CD4-positive, alpha-beta T cell (primary cell): ENCODE measurements at regions of chr16 and their contacts with region 1.

Region 1: GRCh38 chr16:50806099-50807062 is 64.5 kb downstream of the CYLD start:
- DNase-seq: peak; percentile 76 to 93 (median 81)
- ATAC-seq: peak; percentile 94
- H3K4me3 ChIP-seq: peak overlapping the region; percentile 37
- H3K4me3 Mint-ChIP-seq: peak overlapping the region; percentile 80
- H3K27ac ChIP-seq: no peak overlapping the region
- H3K27ac Mint-ChIP-seq: peak overlapping the region; percentile 83
- H3K4me1 ChIP-seq: peaks cover 15% of the 10 kb centered on the region
- H3K4me1 Mint-ChIP-seq: peaks cover 13% of the 10 kb centered on the region
- H3K27me3 ChIP-seq: no peaks in the 10 kb centered on the region
- H3K27me3 Mint-ChIP-seq: no peaks in the 10 kb centered on the region
- CTCF ChIP-seq: peak; percentile 99

Region 2: GRCh38 chr16:49855280-49855821 is 951.0 kb before region 1 on chr16:
- CTCF ChIA-PET with region 1: no interaction called
- POLR2A ChIA-PET with region 1: no interaction called
- intact Hi-C with region 1: loop called in 1 of 2 experiments (anchors 10 kb)
- DNase-seq: peak; percentile 38 to 78 (median 61)
- ATAC-seq: peak; percentile 62
- H3K4me3 ChIP-seq: peak overlapping the region; percentile 24
- H3K4me3 Mint-ChIP-seq: peak overlapping the region; percentile 30
- H3K27ac ChIP-seq: no peak overlapping the region
- H3K27ac Mint-ChIP-seq: no peak overlapping the region
- H3K4me1 ChIP-seq: peaks cover 38% of the 10 kb centered on the region
- H3K4me1 Mint-ChIP-seq: peaks cover 13% of the 10 kb centered on the region
- H3K27me3 ChIP-seq: peaks cover 38 to 56% of the 10 kb centered on the region in 2 experiments
- H3K27me3 Mint-ChIP-seq: peaks cover 53% of the 10 kb centered on the region
- CTCF ChIP-seq: no peak

Region 3: DNA sequence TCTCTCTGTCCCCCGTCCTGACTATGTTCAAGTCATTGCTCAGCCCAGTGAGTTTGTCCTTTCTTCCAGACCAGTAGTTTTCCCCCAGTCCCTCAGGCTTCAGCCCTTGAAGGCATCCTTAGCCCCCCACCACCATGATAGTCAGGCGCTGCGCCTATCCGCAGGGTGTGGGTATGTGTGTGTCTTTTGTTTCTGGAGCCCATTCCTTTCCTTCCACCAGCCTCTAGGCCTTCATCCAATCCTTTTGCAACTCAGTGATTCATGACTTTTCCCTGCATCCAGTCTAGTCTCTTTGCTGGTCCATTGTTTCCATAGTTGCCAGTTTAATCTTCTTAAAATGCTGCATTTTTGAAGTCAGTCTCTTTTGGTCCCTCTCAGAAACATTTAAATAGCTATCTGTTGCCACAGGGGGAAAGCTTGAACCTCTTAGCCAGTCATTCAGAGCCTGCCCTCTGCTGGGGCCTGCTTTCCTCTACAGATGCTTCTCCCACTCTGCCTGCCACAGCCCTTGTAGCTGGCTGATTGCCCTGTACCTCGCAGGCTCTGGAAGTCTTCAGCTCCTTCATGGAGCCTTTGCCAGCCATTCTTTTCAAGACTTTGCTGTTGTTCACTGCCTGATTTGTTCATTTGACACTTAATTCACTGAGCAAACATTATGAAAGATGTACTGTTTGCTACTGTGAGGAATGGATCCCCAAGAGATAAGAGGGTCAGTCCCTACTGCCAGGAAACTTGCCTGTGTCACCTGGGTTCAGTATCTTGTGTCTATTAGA is 595.9 kb before region 1 on chr16:
- CTCF ChIA-PET with region 1: interaction called, 8 read pairs
- POLR2A ChIA-PET with region 1: interaction called, 6 read pairs
- intact Hi-C with region 1: loop called (anchors 1 kb)
- DNase-seq: peak; percentile 42 to 79 (median 58)
- ATAC-seq: peak; percentile 92
- H3K4me3 ChIP-seq: no peak overlapping the region
- H3K4me3 Mint-ChIP-seq: no peak overlapping the region
- H3K27ac ChIP-seq: peak overlapping the region in 1 of 2 donors; percentile 26
- H3K27ac Mint-ChIP-seq: peak overlapping the region; percentile 32
- H3K4me1 ChIP-seq: peaks cover 9% of the 10 kb centered on the region
- H3K4me1 Mint-ChIP-seq: peaks cover 50% of the 10 kb centered on the region
- H3K27me3 ChIP-seq: no peaks in the 10 kb centered on the region
- H3K27me3 Mint-ChIP-seq: no peaks in the 10 kb centered on the region
- CTCF ChIP-seq: peak; percentile 64

Region 4: DNA sequence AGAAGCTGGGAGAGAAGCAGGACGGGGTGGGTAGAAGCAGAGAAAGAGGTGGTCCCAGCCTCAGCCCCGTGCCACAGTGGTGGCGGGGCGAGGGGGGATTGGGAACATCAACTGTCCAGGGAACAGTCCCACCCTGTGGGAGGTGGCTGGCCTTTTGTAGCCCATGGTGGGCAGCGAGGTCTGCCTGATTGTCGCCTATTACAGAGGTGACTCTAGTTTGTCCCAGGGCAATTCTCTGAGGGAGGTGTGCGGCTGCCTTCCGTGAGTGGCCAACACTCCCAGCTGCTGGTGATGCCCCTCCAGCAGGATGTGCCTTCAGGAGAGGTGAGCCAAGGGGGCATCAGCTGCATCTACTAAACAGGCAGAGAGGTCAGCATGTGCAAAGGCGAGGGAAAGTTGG is 432.6 kb before region 1 on chr16:
- CTCF ChIA-PET with region 1: interaction called, 4 read pairs
- POLR2A ChIA-PET with region 1: interaction called, 3 read pairs
- intact Hi-C with region 1: loop called in 1 of 2 experiments (anchors 2 kb)
- DNase-seq: no peak
- ATAC-seq: no peak
- H3K4me3 ChIP-seq: no peak overlapping the region
- H3K4me3 Mint-ChIP-seq: no peak overlapping the region
- H3K27ac ChIP-seq: no peak overlapping the region
- H3K27ac Mint-ChIP-seq: no peak overlapping the region
- H3K4me1 ChIP-seq: peaks cover 6% of the 10 kb centered on the region
- H3K4me1 Mint-ChIP-seq: peaks cover 12% of the 10 kb centered on the region
- H3K27me3 ChIP-seq: no peaks in the 10 kb centered on the region
- H3K27me3 Mint-ChIP-seq: peaks cover 3% of the 10 kb centered on the region
- CTCF ChIP-seq: no peak

Region 5: DNA sequence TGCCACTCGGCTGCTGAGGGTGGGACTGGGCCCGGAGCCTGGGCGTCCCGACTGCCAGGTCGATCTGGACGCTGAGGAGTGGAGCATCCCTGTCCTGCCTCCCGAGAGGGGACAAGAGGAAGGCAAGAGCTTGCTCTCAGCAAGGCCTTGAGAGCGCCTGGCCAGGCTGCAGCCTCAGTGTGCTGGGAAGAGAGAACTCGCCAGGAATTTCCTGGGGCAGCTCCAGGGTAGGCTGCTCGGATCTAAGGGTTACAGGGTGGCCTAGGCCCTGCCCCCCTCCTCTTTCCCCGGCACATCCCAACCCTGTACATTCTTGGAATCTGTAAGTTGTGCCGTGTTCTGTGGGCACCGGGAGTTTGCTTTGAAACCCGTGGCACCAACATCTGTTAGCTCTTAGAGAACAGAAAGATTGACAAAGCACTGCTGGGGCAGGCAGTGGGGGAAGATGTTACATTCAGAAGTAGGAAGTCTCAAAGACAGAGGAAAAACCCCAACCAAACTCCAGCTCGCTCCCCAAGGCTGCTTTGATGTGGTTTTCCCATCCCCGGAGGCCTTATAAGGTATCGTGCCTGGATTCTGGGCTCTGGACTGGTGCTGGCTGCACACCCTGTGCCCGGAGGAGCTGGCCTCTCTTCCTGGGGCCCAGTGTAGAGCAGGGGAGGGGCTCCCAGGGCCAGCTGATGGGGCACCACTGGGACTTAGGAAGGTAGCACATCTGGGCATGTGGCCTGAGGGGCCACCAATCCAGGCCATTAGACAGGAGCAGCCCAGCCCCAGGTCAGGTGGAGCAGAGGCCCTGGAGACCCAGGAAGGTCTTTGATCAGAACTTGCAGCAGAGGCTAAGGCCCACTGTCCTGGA is 202.9 kb before region 1 on chr16:
- CTCF ChIA-PET with region 1: no interaction called
- POLR2A ChIA-PET with region 1: no interaction called
- intact Hi-C with region 1: no loop called
- DNase-seq: peak in 3 of 14 experiments; percentile 26 to 49 (median 34)
- ATAC-seq: no peak
- H3K4me3 ChIP-seq: no peak overlapping the region
- H3K4me3 Mint-ChIP-seq: peak overlapping the region; percentile 5
- H3K27ac ChIP-seq: peak overlapping the region in 1 of 2 donors; percentile 29
- H3K27ac Mint-ChIP-seq: peak overlapping the region; percentile 74
- H3K4me1 ChIP-seq: peaks cover 44% of the 10 kb centered on the region
- H3K4me1 Mint-ChIP-seq: peaks cover 52% of the 10 kb centered on the region
- H3K27me3 ChIP-seq: no peaks in the 10 kb centered on the region
- H3K27me3 Mint-ChIP-seq: no peaks in the 10 kb centered on the region
- CTCF ChIP-seq: no peak

Region 6: GRCh38 chr16:50653633-50654519 is 152.5 kb before region 1 on chr16:
- CTCF ChIA-PET with region 1: no interaction called
- POLR2A ChIA-PET with region 1: no interaction called
- intact Hi-C with region 1: no loop called
- DNase-seq: no peak
- ATAC-seq: no peak
- H3K4me3 ChIP-seq: no peak overlapping the region
- H3K4me3 Mint-ChIP-seq: no peak overlapping the region
- H3K27ac ChIP-seq: no peak overlapping the region
- H3K27ac Mint-ChIP-seq: no peak overlapping the region
- H3K4me1 ChIP-seq: no peaks in the 10 kb centered on the region
- H3K4me1 Mint-ChIP-seq: no peaks in the 10 kb centered on the region
- H3K27me3 ChIP-seq: no peaks in the 10 kb centered on the region
- H3K27me3 Mint-ChIP-seq: no peaks in the 10 kb centered on the region
- CTCF ChIP-seq: no peak

Region 7: GRCh38 chr16:50681021-50681885 is 125.1 kb before region 1 on chr16 and contains the start of gene SNX20:
- CTCF ChIA-PET with region 1: interaction called, 16 read pairs
- POLR2A ChIA-PET with region 1: interaction called, 4 read pairs
- intact Hi-C with region 1: no loop called
- DNase-seq: peak in 13 of 14 experiments; percentile 57 to 90 (median 69)
- ATAC-seq: peak; percentile 82
- H3K4me3 ChIP-seq: peak within 1 kb of the TSS; percentile 96
- H3K4me3 Mint-ChIP-seq: peak within 1 kb of the TSS; percentile 97
- H3K27ac ChIP-seq: peak within 1 kb of the TSS; percentile 87 to 92
- H3K27ac Mint-ChIP-seq: peak within 1 kb of the TSS; percentile 84
- H3K4me1 ChIP-seq: peaks cover 91% of the 10 kb centered on the region
- H3K4me1 Mint-ChIP-seq: peaks cover 93% of the 10 kb centered on the region
- H3K27me3 ChIP-seq: no peaks in the 10 kb centered on the region
- H3K27me3 Mint-ChIP-seq: no peaks in the 10 kb centered on the region
- CTCF ChIP-seq: no peak
- total RNA-seq, gene SNX20: 26.6 TPM

Region 8: DNA sequence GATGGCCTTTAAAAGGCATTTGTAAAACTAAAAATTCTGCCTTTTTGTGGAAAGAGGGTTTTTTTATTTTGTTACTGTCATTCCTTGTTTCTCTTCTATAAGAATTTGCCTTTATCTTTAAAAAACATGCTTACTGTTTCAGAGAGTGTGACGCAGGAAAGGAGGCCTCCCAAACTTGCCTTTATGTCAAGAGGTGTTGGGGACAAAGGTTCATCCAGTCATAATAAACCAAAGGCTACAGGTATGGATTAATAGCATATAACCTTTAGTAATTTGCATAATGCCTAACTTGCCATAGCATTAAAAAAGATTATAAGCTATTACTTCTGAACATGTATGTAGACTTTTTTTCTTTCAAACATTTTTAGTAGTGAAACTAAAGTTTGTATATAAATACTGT is 30.3 kb before region 1 on chr16:
- CTCF ChIA-PET with region 1: interaction called, 17 read pairs
- POLR2A ChIA-PET with region 1: interaction called, 5 read pairs
- intact Hi-C with region 1: no loop called
- DNase-seq: no peak
- ATAC-seq: peak; percentile 39
- H3K4me3 ChIP-seq: no peak overlapping the region
- H3K4me3 Mint-ChIP-seq: no peak overlapping the region
- H3K27ac ChIP-seq: no peak overlapping the region
- H3K27ac Mint-ChIP-seq: peak overlapping the region; percentile 67
- H3K4me1 ChIP-seq: peaks cover 18% of the 10 kb centered on the region
- H3K4me1 Mint-ChIP-seq: peaks cover 89% of the 10 kb centered on the region
- H3K27me3 ChIP-seq: no peaks in the 10 kb centered on the region
- H3K27me3 Mint-ChIP-seq: no peaks in the 10 kb centered on the region
- CTCF ChIP-seq: no peak